AG04450 (cell line): ENCODE measurements at regions of chr6 and their contacts with region 1.

Region 1: GRCh38 chr6:35601331-35602132 is 87.2 kb downstream of the FKBP5 start:
- DNase-seq: peak; percentile 88
- H3K4me3 ChIP-seq: peak overlapping the region; percentile 11
- H3K27ac ChIP-seq: peak overlapping the region; percentile 58
- H3K27me3 ChIP-seq: no peaks in the 10 kb centered on the region
- CTCF ChIP-seq: no peak

Region 2: GRCh38 chr6:35624341-35625070 is 23.0 kb after region 1 on chr6:
- CTCF ChIA-PET with region 1: interaction called, 13 read pairs
- POLR2A ChIA-PET with region 1: interaction called, 3 read pairs
- DNase-seq: no peak
- H3K4me3 ChIP-seq: no peak overlapping the region
- H3K27ac ChIP-seq: no peak overlapping the region
- H3K27me3 ChIP-seq: no peaks in the 10 kb centered on the region
- CTCF ChIP-seq: peak; percentile 48